CD4-positive, alpha-beta T cell (primary cell): ENCODE measurements at regions of chr6 and their contacts with region 1.

Region 1: GRCh38 chr6:43143235-43144124 is 27.6 kb upstream of the SRF start:
- DNase-seq: peak; percentile 50 to 88 (median 70)
- ATAC-seq: peak; percentile 99
- H3K4me3 ChIP-seq: no peak overlapping the region
- H3K4me3 Mint-ChIP-seq: no peak overlapping the region
- H3K27ac ChIP-seq: no peak overlapping the region
- H3K27ac Mint-ChIP-seq: no peak overlapping the region
- H3K4me1 ChIP-seq: peaks cover 19% of the 10 kb centered on the region
- H3K4me1 Mint-ChIP-seq: peaks cover 10% of the 10 kb centered on the region
- H3K27me3 ChIP-seq: peaks cover 0 to 2% of the 10 kb centered on the region in 2 experiments
- H3K27me3 Mint-ChIP-seq: no peaks in the 10 kb centered on the region
- CTCF ChIP-seq: peak; percentile 88

Region 2: DNA sequence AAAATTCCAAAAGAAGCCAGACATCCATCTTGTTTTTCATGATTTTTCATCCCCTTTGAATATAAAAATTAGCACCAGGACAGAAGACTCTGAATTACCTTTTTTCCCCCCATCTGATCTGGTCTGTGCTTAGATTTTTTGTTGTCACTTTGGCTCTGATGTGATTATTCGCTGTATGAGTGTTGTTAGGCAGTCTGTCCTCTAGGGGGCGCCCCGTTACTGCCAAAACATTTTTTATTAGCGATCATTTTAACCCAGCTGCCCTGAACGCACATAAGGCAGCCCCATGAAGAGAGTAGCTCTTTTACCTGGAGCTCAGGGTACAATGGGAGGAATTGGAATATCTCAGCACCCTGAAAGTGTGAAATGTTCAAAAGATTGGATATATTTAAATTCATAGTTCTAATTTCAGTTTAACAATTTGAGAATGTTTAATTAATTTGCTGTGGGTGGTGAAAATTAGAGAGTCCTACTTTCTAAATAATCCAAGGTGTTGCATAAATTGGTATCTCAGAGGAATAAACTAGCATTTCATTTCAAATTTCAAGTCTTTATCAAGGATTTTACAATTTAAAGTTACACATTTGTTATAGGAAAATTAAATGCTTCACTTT is 481.8 kb before region 1 on chr6:
- CTCF ChIA-PET with region 1: no interaction called
- POLR2A ChIA-PET with region 1: no interaction called
- intact Hi-C with region 1: loop called (anchors 2 to 5 kb)
- DNase-seq: peak; percentile 75 to 91 (median 85)
- ATAC-seq: peak; percentile 100
- H3K4me3 ChIP-seq: no peak overlapping the region
- H3K4me3 Mint-ChIP-seq: no peak overlapping the region
- H3K27ac ChIP-seq: no peak overlapping the region
- H3K27ac Mint-ChIP-seq: no peak overlapping the region
- H3K4me1 ChIP-seq: no peaks in the 10 kb centered on the region
- H3K4me1 Mint-ChIP-seq: no peaks in the 10 kb centered on the region
- H3K27me3 ChIP-seq: no peaks in the 10 kb centered on the region
- H3K27me3 Mint-ChIP-seq: no peaks in the 10 kb centered on the region
- CTCF ChIP-seq: peak; percentile 90

Region 3: GRCh38 chr6:42969431-42969830 is 174.0 kb before region 1 on chr6:
- CTCF ChIA-PET with region 1: interaction called, 3 read pairs
- POLR2A ChIA-PET with region 1: no interaction called
- intact Hi-C with region 1: loop called in 1 of 2 experiments (anchors 5 kb)
- DNase-seq: no peak
- ATAC-seq: no peak
- H3K4me3 ChIP-seq: no peak overlapping the region
- H3K4me3 Mint-ChIP-seq: no peak overlapping the region
- H3K27ac ChIP-seq: no peak overlapping the region
- H3K27ac Mint-ChIP-seq: no peak overlapping the region
- H3K4me1 ChIP-seq: no peaks in the 10 kb centered on the region
- H3K4me1 Mint-ChIP-seq: no peaks in the 10 kb centered on the region
- H3K27me3 ChIP-seq: no peaks in the 10 kb centered on the region
- H3K27me3 Mint-ChIP-seq: no peaks in the 10 kb centered on the region
- CTCF ChIP-seq: no peak

Region 4: GRCh38 chr6:43013843-43014433 is 129.5 kb before region 1 on chr6 and contains the starts of genes KLHDC3 and MEA1:
- CTCF ChIA-PET with region 1: interaction called, 4 read pairs
- POLR2A ChIA-PET with region 1: interaction called, 3 read pairs
- intact Hi-C with region 1: loop called in 1 of 2 experiments (anchors 1 kb)
- DNase-seq: peak; percentile 95 to 100 (median 98)
- ATAC-seq: peak; percentile 91
- H3K4me3 ChIP-seq: peak within 1 kb of the TSS; percentile 86
- H3K4me3 Mint-ChIP-seq: peak within 1 kb of the TSS; percentile 88
- H3K27ac ChIP-seq: peak within 1 kb of the TSS; percentile 51 to 59
- H3K27ac Mint-ChIP-seq: peak within 1 kb of the TSS; percentile 81
- H3K4me1 ChIP-seq: peaks cover 55% of the 10 kb centered on the region
- H3K4me1 Mint-ChIP-seq: peaks cover 59% of the 10 kb centered on the region
- H3K27me3 ChIP-seq: no peaks in the 10 kb centered on the region
- H3K27me3 Mint-ChIP-seq: no peaks in the 10 kb centered on the region
- CTCF ChIP-seq: no peak
- total RNA-seq, gene KLHDC3: 21.0 to 22.3 TPM
- total RNA-seq, gene MEA1: 13.6 to 17.0 TPM

Region 5: DNA sequence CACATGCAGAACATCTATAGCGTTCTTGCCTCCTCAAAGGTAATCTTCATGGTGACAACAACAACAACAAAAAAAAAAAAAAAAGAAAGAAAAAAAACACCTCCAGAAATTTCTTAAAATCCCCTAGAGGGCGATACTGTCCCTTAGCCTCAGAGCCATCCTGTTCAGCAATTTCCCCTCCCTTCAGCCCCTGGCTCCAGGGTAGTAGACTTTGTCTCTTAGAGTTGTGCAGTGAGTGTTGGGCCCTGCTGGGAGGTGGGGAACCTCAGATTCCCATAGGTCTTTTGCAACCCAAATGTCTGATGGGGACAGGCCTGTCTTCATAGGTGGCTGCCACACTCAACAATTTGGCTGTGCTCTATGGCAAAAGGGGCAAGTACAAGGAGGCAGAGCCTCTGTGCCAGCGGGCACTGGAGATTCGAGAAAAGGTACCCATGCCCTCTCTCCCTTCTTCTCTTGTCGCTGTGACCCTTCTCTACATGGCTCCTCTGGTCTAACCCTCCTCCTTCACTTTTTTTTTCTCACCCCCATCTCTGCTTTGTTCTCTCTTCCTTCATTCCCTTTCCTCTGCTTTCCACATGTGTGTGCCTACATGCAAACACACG is 73.3 kb before region 1 on chr6:
- CTCF ChIA-PET with region 1: no interaction called
- POLR2A ChIA-PET with region 1: no interaction called
- intact Hi-C with region 1: loop called (anchors 1 to 2 kb)
- DNase-seq: peak in 4 of 14 experiments; percentile 10 to 66 (median 53)
- ATAC-seq: peak; percentile 73
- H3K4me3 ChIP-seq: no peak overlapping the region
- H3K4me3 Mint-ChIP-seq: no peak overlapping the region
- H3K27ac ChIP-seq: no peak overlapping the region
- H3K27ac Mint-ChIP-seq: no peak overlapping the region
- H3K4me1 ChIP-seq: no peaks in the 10 kb centered on the region
- H3K4me1 Mint-ChIP-seq: no peaks in the 10 kb centered on the region
- H3K27me3 ChIP-seq: peaks cover 0 to under 1% of the 10 kb centered on the region in 2 experiments
- H3K27me3 Mint-ChIP-seq: no peaks in the 10 kb centered on the region
- CTCF ChIP-seq: peak; percentile 34

Region 6: GRCh38 chr6:43129434-43130194 is 13.9 kb before region 1 on chr6:
- CTCF ChIA-PET with region 1: no interaction called
- POLR2A ChIA-PET with region 1: no interaction called
- intact Hi-C with region 1: no loop called
- DNase-seq: peak in 8 of 14 experiments; percentile 10 to 43 (median 16)
- ATAC-seq: no peak
- H3K4me3 ChIP-seq: no peak overlapping the region
- H3K4me3 Mint-ChIP-seq: no peak overlapping the region
- H3K27ac ChIP-seq: no peak overlapping the region
- H3K27ac Mint-ChIP-seq: no peak overlapping the region
- H3K4me1 ChIP-seq: no peaks in the 10 kb centered on the region
- H3K4me1 Mint-ChIP-seq: no peaks in the 10 kb centered on the region
- H3K27me3 ChIP-seq: no peaks in the 10 kb centered on the region
- H3K27me3 Mint-ChIP-seq: no peaks in the 10 kb centered on the region
- CTCF ChIP-seq: no peak